ENCODE measurements at regions of chr3 and their contacts with region 1.

Region 1: GRCh38 chr3:133573054-133573628 is 345 bp upstream of the CDV3 start:
- DNase-seq: peak; percentile 100
- ATAC-seq: peak; percentile 93
- H3K4me3 Mint-ChIP-seq: peak overlapping the region; percentile 68
- H3K27ac Mint-ChIP-seq: peak overlapping the region; percentile 99
- H3K4me1 Mint-ChIP-seq: peaks cover 36% of the 10 kb centered on the region
- H3K27me3 Mint-ChIP-seq: no peaks in the 10 kb centered on the region
- CTCF ChIP-seq: no peak

Region 2: DNA sequence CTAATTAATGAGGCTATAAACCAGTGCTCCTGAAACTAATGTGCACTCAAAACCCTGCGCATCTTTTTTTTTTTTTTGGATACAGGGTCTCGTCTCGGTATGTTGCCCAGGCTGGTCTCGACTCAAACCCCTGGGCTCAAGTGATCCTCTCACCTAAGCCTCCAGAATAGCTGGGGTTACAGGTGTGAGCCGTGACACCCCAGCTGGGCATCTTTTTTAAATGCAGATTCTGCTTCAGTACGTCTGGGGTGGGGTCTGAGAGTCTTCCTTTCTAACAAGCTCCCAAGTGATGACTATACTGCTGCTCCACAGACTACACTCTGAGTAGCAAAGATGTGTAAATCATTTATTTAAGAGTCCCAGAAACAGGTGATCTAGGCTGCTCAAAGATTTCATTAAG is 100.3 kb before region 1 on chr3:
- CTCF ChIA-PET with region 1: interaction called, 7 read pairs
- POLR2A ChIA-PET with region 1: interaction called, 10 read pairs
- DNase-seq: no peak
- ATAC-seq: peak; percentile 46
- H3K4me3 Mint-ChIP-seq: no peak overlapping the region
- H3K27ac Mint-ChIP-seq: no peak overlapping the region
- H3K4me1 Mint-ChIP-seq: peaks cover 33% of the 10 kb centered on the region
- H3K27me3 Mint-ChIP-seq: peaks cover 17% of the 10 kb centered on the region
- CTCF ChIP-seq: no peak

Measured in WTC11 (cell line).